ENCODE measurements at regions of chr5 and their contacts with region 1.

Region 1: GRCh38 chr5:40410231-40410861 is 269.4 kb upstream of the PTGER4 start:
- DNase-seq: peak; percentile 87 to 97 (median 95)
- H3K4me3 ChIP-seq: peak overlapping the region in 3 of 7 experiments; percentile 12 to 62 (median 21)
- H3K27ac ChIP-seq: peak overlapping the region; percentile 10 to 71
- H3K4me1 ChIP-seq: peaks cover 23 to 41% (median 33%) of the 10 kb centered on the region in 4 experiments
- H3K27me3 ChIP-seq: no peaks in the 10 kb centered on the region

Region 2: DNA sequence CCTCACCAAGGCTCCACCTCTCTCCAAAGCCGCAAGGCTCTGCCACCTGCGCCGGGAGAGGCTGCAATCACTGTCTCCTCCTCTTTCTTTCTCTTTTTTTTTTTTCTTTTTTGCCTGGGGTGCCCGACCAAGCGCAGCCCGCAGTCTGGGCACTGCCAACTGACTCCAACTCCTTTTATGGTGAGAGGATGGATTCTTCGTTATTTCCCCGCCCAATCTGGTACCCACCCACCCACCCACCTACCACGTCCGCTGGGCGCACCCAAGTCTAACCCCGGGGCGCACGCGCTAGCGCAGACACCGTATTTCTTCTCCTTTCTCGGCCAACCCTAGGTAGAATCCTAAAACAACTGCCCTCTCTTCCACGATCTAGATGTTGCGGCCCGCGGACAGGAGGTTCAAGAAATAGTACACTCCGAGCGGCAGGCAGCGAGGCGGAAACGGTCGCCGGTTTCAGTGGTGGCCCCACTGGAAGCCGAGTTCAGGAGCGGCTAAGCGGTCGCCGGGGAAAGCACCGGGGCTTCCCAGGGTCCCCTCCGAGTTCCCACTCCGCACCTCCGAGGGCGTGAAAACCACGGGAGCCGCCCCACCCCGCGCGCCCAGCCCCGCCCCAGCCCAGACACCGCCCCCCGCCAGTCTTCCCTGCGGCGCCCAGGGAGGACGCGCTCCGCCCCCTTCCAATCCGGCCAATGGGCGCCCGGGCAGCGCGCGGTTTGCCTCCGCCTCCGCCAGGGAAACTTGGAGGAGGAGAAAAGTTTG is 269.0 kb after region 1 on chr5:
- CTCF ChIA-PET with region 1: interaction called, 5 read pairs
- POLR2A ChIA-PET with region 1: interaction called, 10 read pairs
- DNase-seq: peak; percentile 90 to 96 (median 93)
- H3K4me3 ChIP-seq: peak overlapping the region; percentile 84 to 96 (median 90)
- H3K27ac ChIP-seq: peak overlapping the region; percentile 64 to 88
- H3K4me1 ChIP-seq: peaks cover 38 to 70% (median 55%) of the 10 kb centered on the region in 4 experiments
- H3K27me3 ChIP-seq: no peaks in the 10 kb centered on the region